ENCODE measurements at regions of chr4 and their contacts with region 1.

Region 1: DNA sequence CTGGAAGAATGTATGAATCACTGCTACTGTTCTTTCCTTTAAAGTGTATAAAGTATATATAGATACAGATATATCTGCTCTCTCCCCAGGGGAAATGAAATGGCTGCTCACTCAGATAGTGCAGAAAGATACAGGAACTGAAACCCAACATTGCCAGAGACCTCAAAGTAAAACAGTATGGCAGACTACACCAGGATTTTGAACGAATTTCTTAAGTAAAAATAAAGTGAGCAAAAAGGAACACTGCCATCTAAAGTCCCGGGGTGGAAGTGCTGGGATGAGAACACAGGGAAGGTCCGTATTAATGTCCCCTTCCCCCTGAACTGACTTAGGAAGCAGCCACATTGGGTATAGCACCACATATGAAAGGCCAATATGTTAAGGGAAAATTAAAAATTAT is 93.4 kb downstream of the TMA16 start:
- DNase-seq: peak; percentile 34
- ATAC-seq: peak; percentile 77
- H3K4me3 Mint-ChIP-seq: peak overlapping the region; percentile 65
- H3K27ac Mint-ChIP-seq: peak overlapping the region; percentile 92
- H3K4me1 Mint-ChIP-seq: peaks cover 79% of the 10 kb centered on the region
- H3K27me3 Mint-ChIP-seq: no peaks in the 10 kb centered on the region
- CTCF ChIP-seq: no peak

Region 2: DNA sequence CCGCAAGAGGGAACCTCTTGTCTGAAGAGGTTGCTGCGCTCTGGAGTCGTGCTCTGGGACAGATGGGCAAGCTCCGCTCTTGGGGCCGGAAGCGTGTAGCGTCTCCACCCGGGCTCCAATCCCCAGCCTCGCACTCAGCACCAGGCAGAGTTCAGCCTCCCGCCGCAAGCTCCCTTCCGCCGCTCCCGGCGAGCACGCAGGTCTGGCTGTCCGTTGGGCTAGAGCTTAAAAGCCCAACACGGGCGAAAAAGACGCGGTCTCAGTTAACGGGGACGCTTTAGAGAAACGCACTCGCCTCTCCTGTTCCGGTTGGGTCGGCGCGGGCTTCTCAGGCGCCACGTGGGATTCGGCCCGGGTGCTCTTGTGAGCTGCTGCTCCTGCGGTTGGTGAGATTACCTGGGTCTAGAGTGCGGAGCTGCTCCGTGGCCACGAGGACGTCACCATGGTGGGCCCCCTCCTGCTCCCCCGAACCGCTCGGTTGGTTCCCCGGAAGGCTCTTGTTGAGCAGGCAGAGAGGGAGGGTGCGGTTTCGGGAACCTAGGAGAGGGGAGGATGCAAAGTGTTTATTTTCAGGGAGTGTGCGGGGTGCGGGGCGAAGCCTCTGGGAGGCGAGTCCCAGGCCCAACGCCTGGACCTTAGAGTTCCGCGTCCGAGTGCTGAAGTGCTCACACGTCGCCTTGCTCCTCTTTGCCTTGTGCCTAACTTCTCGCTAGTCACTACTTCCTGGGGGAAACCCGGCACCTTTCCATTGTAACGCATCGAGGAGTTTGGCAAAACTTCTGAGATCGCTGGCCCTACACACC is 93.3 kb before region 1 on chr4 and contains the start of gene TMA16:
- CTCF ChIA-PET with region 1: no interaction called
- POLR2A ChIA-PET with region 1: interaction called, 20 read pairs
- intact Hi-C with region 1: loop called (anchors 1 kb)
- DNase-seq: peak; percentile 75
- ATAC-seq: peak; percentile 66
- H3K4me3 Mint-ChIP-seq: peak within 1 kb of the TSS; percentile 99
- H3K27ac Mint-ChIP-seq: peak within 1 kb of the TSS; percentile 99
- H3K4me1 Mint-ChIP-seq: peaks cover 43% of the 10 kb centered on the region
- H3K27me3 Mint-ChIP-seq: no peaks in the 10 kb centered on the region
- CTCF ChIP-seq: no peak
- total RNA-seq, gene TMA16: 52.5 and 54.1 TPM in 2 replicates

Region 3: DNA sequence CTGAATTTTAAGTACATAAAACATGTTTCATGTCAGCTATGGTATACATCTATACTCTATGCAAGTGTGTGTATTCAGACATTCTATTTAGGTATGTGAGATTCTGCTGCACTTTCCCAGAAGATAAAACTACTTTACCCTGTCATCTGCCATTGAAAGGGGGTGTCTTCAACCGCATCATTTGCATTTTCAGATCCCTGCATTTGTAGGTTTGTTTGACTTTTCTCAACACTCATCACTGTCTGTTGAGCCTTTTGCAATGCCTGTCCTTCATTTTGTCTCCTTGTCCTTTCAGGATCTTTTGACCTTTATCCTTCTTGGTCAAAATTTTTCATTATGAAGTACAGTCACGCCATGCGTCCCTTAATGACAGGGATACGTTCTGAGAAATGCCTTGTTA is 10.2 kb after region 1 on chr4:
- CTCF ChIA-PET with region 1: interaction called, 10 read pairs
- POLR2A ChIA-PET with region 1: interaction called, 129 read pairs
- intact Hi-C with region 1: loop called (anchors 1 kb)
- DNase-seq: no peak
- ATAC-seq: peak; percentile 54
- H3K4me3 Mint-ChIP-seq: peak overlapping the region; percentile 45
- H3K27ac Mint-ChIP-seq: peak overlapping the region; percentile 84
- H3K4me1 Mint-ChIP-seq: peaks cover 74% of the 10 kb centered on the region
- H3K27me3 Mint-ChIP-seq: no peaks in the 10 kb centered on the region
- CTCF ChIP-seq: no peak

Region 4: GRCh38 chr4:163611784-163612445 is 24.0 kb after region 1 on chr4:
- CTCF ChIA-PET with region 1: interaction called, 63 read pairs
- POLR2A ChIA-PET with region 1: interaction called, 153 read pairs
- intact Hi-C with region 1: loop called (anchors 1 kb)
- DNase-seq: no peak
- ATAC-seq: peak; percentile 38
- H3K4me3 Mint-ChIP-seq: peak overlapping the region; percentile 89
- H3K27ac Mint-ChIP-seq: peak overlapping the region; percentile 98
- H3K4me1 Mint-ChIP-seq: peaks cover 74% of the 10 kb centered on the region
- H3K27me3 Mint-ChIP-seq: no peaks in the 10 kb centered on the region
- CTCF ChIP-seq: no peak

Region 5: GRCh38 chr4:163651761-163652160 is 63.9 kb after region 1 on chr4:
- CTCF ChIA-PET with region 1: no interaction called
- POLR2A ChIA-PET with region 1: no interaction called
- intact Hi-C with region 1: no loop called
- DNase-seq: no peak
- ATAC-seq: no peak
- H3K4me3 Mint-ChIP-seq: no peak overlapping the region
- H3K27ac Mint-ChIP-seq: no peak overlapping the region
- H3K4me1 Mint-ChIP-seq: peaks cover 12% of the 10 kb centered on the region
- H3K27me3 Mint-ChIP-seq: no peaks in the 10 kb centered on the region
- CTCF ChIP-seq: no peak

Region 6: DNA sequence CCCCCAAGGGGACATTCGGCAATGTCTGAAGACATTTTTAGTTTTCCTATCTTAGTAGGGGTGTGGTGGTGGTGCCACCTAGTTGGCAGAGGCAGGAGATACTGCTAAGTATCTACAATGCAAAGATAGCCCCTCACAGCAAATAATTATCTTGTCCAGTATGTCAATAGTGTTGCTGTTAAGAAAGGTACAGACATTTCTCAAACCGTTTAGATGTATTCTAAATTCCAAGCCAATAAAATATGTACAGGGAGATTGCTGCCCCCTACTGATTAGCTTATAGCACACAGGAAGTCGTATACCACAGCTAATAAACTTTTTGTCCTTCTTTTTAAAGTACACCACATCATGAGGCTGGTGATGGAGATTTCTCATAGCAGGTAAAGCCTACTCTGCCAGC is 167.1 kb after region 1 on chr4:
- CTCF ChIA-PET with region 1: no interaction called
- POLR2A ChIA-PET with region 1: no interaction called
- intact Hi-C with region 1: loop called (anchors 1 kb)
- DNase-seq: no peak
- ATAC-seq: peak; percentile 56
- H3K4me3 Mint-ChIP-seq: peak overlapping the region; percentile 8
- H3K27ac Mint-ChIP-seq: no peak overlapping the region
- H3K4me1 Mint-ChIP-seq: peaks cover 3% of the 10 kb centered on the region
- H3K27me3 Mint-ChIP-seq: peaks cover 4% of the 10 kb centered on the region
- CTCF ChIP-seq: no peak

Region 7: DNA sequence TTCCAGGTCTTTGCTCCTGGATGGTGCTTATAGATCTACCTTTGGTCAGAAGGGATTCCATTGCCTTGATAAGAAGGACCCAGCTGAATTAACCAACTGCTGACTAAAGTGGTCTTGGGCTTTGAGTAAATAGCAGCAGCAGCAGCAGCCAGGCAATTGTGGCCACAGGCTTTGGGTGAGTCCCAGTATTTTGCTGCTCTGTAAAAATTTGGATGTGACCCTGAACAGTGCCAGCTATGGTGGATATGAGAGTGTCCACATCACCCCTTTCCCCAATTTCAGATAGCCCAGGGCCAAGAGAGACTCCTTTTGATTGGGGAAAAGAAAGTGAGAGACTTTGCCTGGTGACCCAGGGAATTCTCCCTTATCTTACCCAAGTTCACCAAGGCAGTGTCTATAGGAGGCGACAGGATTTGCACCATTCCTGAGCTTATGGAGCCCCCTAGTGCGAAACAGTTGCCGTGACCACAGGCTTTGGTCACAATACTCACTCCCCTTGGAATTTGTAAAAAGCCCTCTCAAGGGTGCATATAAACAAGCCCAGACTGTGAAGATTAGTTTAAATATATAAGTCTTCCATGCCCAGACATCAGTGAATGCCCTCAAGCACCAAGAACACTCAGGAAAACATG is 424.6 kb after region 1 on chr4:
- CTCF ChIA-PET with region 1: no interaction called
- POLR2A ChIA-PET with region 1: no interaction called
- intact Hi-C with region 1: no loop called
- DNase-seq: no peak
- ATAC-seq: no peak
- H3K4me3 Mint-ChIP-seq: no peak overlapping the region
- H3K27ac Mint-ChIP-seq: no peak overlapping the region
- H3K4me1 Mint-ChIP-seq: no peaks in the 10 kb centered on the region
- H3K27me3 Mint-ChIP-seq: no peaks in the 10 kb centered on the region
- CTCF ChIP-seq: no peak

Measured in activated B cell treated with CpG ODN at 0.5 μM for 24 hours (primary cell).